ENCODE measurements at regions of chr13 and their contacts with region 1.

Region 1: GRCh38 chr13:97975848-97976609 is 22.6 kb downstream of the IPO5 start:
- DNase-seq: peak; percentile 98
- CTCF ChIP-seq: no peak

Region 2: GRCh38 chr13:97432917-97433726 is 542.9 kb before region 1 on chr13:
- in situ Hi-C with region 1: loop called (anchors 25 kb)
- DNase-seq: peak; percentile 84
- CTCF ChIP-seq: no peak

Region 3: GRCh38 chr13:98173431-98174152 is 197.6 kb after region 1 on chr13:
- in situ Hi-C with region 1: no loop called
- DNase-seq: no peak
- CTCF ChIP-seq: no peak

Region 4: GRCh38 chr13:98613591-98613990 is 637.6 kb after region 1 on chr13:
- in situ Hi-C with region 1: no loop called
- DNase-seq: no peak
- CTCF ChIP-seq: no peak